Naive thymus-derived CD4-positive, alpha-beta T cell (primary cell): ENCODE measurements at regions of chr19 and their contacts with region 1.

Region 1: GRCh38 chr19:16197622-16198369 is at the start of gene AP1M1:
- DNase-seq: peak; percentile 96 to 99 (median 97)
- ATAC-seq: peak; percentile 94
- H3K4me3 ChIP-seq: peak within 1 kb of the TSS; percentile 99
- H3K4me3 Mint-ChIP-seq: peak within 1 kb of the TSS; percentile 81 to 95 (median 90)
- H3K27ac ChIP-seq: peak within 1 kb of the TSS; percentile 95
- H3K27ac Mint-ChIP-seq: peak within 1 kb of the TSS; percentile 90 to 99 (median 97)
- H3K4me1 ChIP-seq: peaks cover 16 to 23% of the 10 kb centered on the region in 2 donors
- H3K4me1 Mint-ChIP-seq: peaks cover 38 to 49% (median 46%) of the 10 kb centered on the region in 7 donors
- H3K27me3 ChIP-seq: no peaks in the 10 kb centered on the region
- H3K27me3 Mint-ChIP-seq: no peaks in the 10 kb centered on the region
- total RNA-seq, gene AP1M1: 94.9 to 149 (median 125) TPM

Region 2: GRCh38 chr19:16018801-16019551 is 178.8 kb before region 1 on chr19:
- CTCF ChIA-PET with region 1: no interaction called
- POLR2A ChIA-PET with region 1: no interaction called
- intact Hi-C with region 1: no loop called
- DNase-seq: no peak
- ATAC-seq: no peak
- H3K4me3 ChIP-seq: no peak overlapping the region
- H3K4me3 Mint-ChIP-seq: no peak overlapping the region
- H3K27ac ChIP-seq: no peak overlapping the region
- H3K27ac Mint-ChIP-seq: no peak overlapping the region
- H3K4me1 ChIP-seq: no peaks in the 10 kb centered on the region
- H3K4me1 Mint-ChIP-seq: no peaks in the 10 kb centered on the region
- H3K27me3 ChIP-seq: no peaks in the 10 kb centered on the region
- H3K27me3 Mint-ChIP-seq: no peaks in the 10 kb centered on the region

Region 3: GRCh38 chr19:16068696-16069259 is 129.0 kb before region 1 on chr19:
- CTCF ChIA-PET with region 1: no interaction called
- POLR2A ChIA-PET with region 1: no interaction called
- intact Hi-C with region 1: no loop called
- DNase-seq: no peak
- ATAC-seq: no peak
- H3K4me3 ChIP-seq: no peak overlapping the region
- H3K4me3 Mint-ChIP-seq: no peak overlapping the region
- H3K27ac ChIP-seq: peak overlapping the region; percentile 89
- H3K27ac Mint-ChIP-seq: no peak overlapping the region
- H3K4me1 ChIP-seq: peaks cover 22 to 45% of the 10 kb centered on the region in 2 donors
- H3K4me1 Mint-ChIP-seq: peaks cover 18 to 33% (median 25%) of the 10 kb centered on the region in 7 donors
- H3K27me3 ChIP-seq: no peaks in the 10 kb centered on the region
- H3K27me3 Mint-ChIP-seq: no peaks in the 10 kb centered on the region

Region 4: DNA sequence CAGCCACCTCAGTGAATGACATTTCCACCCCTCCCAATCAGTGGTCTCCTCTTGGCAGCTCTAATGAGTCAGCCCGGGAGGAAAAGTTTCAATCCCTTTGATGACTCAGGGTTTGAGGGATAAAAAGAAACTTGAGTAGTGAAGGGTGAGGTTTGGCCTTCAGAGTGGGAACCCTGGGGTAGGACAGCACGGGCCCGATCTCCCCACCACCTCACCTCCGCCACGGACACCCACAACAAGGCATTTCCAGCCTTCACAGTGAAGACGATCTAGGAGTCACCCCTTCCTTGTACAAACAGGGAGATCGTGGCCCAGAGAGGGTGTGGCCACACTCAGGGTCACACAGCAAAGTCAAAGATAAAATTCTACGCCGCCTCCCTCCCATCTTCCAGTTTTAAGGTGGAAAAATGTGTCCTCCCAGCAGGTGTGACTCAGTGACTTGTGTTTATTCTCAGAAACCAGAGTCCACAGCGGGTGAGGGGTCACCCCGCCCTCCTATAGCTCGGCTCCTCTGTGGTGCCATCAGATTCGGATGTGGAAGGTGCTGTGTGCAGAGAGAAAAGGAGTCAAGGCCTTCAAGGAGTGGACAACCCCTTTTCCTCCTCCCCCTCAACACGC is 36.7 kb before region 1 on chr19:
- CTCF ChIA-PET with region 1: no interaction called
- POLR2A ChIA-PET with region 1: no interaction called
- intact Hi-C with region 1: no loop called
- DNase-seq: peak in 1 of 9 donors; percentile 68
- ATAC-seq: peak; percentile 40
- H3K4me3 ChIP-seq: no peak overlapping the region
- H3K4me3 Mint-ChIP-seq: no peak overlapping the region
- H3K27ac ChIP-seq: no peak overlapping the region
- H3K27ac Mint-ChIP-seq: peak overlapping the region in 1 of 9 donors; percentile 74
- H3K4me1 ChIP-seq: no peaks in the 10 kb centered on the region
- H3K4me1 Mint-ChIP-seq: peaks cover 0 to 21% (median 0%) of the 10 kb centered on the region in 7 donors
- H3K27me3 ChIP-seq: no peaks in the 10 kb centered on the region
- H3K27me3 Mint-ChIP-seq: no peaks in the 10 kb centered on the region

Region 5: DNA sequence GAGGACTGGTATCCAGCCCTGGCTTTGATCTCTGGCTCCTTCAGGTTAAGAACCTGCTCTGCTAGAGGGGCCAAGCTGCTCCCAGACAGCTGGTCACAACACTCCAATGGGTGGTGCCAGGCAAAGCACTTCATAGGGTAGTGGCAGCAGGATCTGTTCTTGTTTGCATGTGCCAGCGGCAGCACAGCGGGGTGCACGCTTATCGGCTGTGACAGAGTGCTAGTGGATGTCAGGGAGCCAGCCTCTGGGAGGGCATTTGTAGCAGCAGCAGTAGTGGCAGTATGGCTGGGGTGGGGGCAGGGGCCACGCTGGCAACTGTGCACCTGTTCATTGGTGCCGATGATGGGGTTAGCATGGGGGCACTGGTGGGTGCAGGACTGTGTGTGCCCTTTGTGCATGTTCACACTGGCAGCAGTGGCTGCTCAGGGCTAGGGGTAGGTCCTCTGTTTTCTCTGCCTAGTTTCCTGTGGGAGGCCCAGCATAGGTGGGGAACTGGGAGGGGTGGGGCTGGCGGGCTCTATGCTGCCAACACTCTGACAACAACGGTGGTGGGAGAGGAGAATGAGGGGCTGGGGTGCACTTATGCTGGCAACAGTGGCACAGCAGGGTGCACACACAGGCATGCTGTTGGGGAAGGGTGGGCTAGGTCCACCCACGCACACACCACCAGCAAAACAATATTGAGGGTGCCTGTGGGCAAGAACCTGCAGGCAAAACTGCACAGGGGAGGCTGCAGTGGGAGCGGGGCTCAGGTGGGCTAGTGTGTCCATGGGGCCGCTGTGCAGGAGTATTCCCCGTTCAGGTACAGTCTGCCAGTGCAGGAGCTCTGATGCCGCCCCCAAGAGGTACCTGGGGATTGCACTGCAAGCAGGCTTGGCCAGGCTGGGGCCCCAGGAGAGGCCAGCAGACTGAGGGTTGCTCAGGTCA is 19.2 kb after region 1 on chr19:
- CTCF ChIA-PET with region 1: no interaction called
- POLR2A ChIA-PET with region 1: interaction called, 6 read pairs
- intact Hi-C with region 1: loop called in 1 of 2 experiments (anchors 1 kb)
- DNase-seq: peak in 7 of 9 donors; percentile 36 to 55 (median 50)
- ATAC-seq: peak; percentile 76
- H3K4me3 ChIP-seq: peak overlapping the region; percentile 34
- H3K4me3 Mint-ChIP-seq: peak overlapping the region; percentile 33 to 85 (median 78)
- H3K27ac ChIP-seq: peak overlapping the region; percentile 57
- H3K27ac Mint-ChIP-seq: peak overlapping the region; percentile 52 to 97 (median 92)
- H3K4me1 ChIP-seq: peaks cover 0 to 44% of the 10 kb centered on the region in 2 donors
- H3K4me1 Mint-ChIP-seq: peaks cover 29 to 68% (median 56%) of the 10 kb centered on the region in 7 donors
- H3K27me3 ChIP-seq: no peaks in the 10 kb centered on the region
- H3K27me3 Mint-ChIP-seq: no peaks in the 10 kb centered on the region

Region 6: GRCh38 chr19:16338470-16339360 is 140.9 kb after region 1 on chr19:
- CTCF ChIA-PET with region 1: no interaction called
- POLR2A ChIA-PET with region 1: interaction called, 10 read pairs
- intact Hi-C with region 1: no loop called
- DNase-seq: peak in 5 of 9 donors; percentile 30 to 68 (median 50)
- ATAC-seq: peak; percentile 54
- H3K4me3 ChIP-seq: peak overlapping the region; percentile 44
- H3K4me3 Mint-ChIP-seq: peak overlapping the region; percentile 79 to 95 (median 88)
- H3K27ac ChIP-seq: peak overlapping the region; percentile 60
- H3K27ac Mint-ChIP-seq: peak overlapping the region; percentile 86 to 98 (median 91)
- H3K4me1 ChIP-seq: peaks cover 54 to 57% of the 10 kb centered on the region in 2 donors
- H3K4me1 Mint-ChIP-seq: peaks cover 28 to 78% (median 64%) of the 10 kb centered on the region in 7 donors
- H3K27me3 ChIP-seq: no peaks in the 10 kb centered on the region
- H3K27me3 Mint-ChIP-seq: peaks cover 0 to 22% (median 0%) of the 10 kb centered on the region in 5 donors

Region 7: DNA sequence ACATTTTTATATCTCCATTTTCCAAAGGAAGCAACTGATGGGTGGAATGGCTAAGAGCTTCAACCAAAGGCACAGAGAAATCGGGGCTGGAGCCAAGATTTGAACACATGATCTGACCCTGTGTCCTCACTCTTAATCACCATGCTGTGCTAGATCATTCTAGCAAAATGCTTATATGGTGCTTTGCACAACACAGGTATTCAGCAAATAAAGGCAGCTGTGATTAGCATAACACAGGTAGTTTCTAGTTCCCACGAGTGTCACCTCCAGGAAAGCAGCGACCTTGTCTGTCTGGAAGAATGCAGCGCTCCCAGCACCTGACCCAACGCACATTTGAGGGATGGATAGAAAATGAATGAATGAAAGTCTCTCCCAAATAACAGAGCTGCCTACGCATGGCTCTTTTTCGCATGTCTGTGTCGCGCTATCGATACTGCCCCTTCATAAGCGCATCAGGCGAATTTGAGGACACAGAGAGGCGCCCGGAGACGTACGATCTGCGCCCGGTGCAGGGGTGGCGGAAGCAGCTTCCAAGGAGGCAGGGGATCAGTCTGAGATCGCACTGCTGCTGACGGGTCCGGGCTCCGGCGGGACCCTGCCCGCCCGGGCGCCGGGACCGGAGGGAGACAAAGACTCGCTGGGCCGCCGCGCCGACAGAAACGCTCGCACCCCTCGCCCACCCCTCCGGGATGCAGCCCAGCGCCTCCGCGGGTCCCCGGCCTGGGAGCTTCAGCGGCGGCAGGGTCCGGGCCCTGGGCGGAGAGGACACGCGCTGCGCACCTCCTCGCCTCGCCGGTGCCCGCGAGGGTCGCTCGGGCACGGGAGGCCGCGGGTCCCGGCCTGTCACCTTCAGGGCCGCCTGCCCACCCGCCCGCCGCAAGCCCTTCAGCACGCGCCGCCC is 273.4 kb after region 1 on chr19:
- CTCF ChIA-PET with region 1: no interaction called
- POLR2A ChIA-PET with region 1: no interaction called
- intact Hi-C with region 1: loop called in 1 of 2 experiments (anchors 5 kb)
- DNase-seq: peak in 5 of 9 donors; percentile 14 to 40 (median 18)
- ATAC-seq: peak; percentile 2
- H3K4me3 ChIP-seq: peak overlapping the region; percentile 96
- H3K4me3 Mint-ChIP-seq: peak overlapping the region; percentile 84 to 93 (median 88)
- H3K27ac ChIP-seq: peak overlapping the region; percentile 96
- H3K27ac Mint-ChIP-seq: peak overlapping the region; percentile 18 to 87 (median 79)
- H3K4me1 ChIP-seq: peaks cover 5 to 15% of the 10 kb centered on the region in 2 donors
- H3K4me1 Mint-ChIP-seq: peaks cover 30 to 47% (median 41%) of the 10 kb centered on the region in 7 donors
- H3K27me3 ChIP-seq: no peaks in the 10 kb centered on the region
- H3K27me3 Mint-ChIP-seq: peaks cover 0 to 2% (median 0%) of the 10 kb centered on the region in 5 donors